GM12878 (cell line): ENCODE measurements at regions of chr16 and their contacts with region 1.

Region 1: DNA sequence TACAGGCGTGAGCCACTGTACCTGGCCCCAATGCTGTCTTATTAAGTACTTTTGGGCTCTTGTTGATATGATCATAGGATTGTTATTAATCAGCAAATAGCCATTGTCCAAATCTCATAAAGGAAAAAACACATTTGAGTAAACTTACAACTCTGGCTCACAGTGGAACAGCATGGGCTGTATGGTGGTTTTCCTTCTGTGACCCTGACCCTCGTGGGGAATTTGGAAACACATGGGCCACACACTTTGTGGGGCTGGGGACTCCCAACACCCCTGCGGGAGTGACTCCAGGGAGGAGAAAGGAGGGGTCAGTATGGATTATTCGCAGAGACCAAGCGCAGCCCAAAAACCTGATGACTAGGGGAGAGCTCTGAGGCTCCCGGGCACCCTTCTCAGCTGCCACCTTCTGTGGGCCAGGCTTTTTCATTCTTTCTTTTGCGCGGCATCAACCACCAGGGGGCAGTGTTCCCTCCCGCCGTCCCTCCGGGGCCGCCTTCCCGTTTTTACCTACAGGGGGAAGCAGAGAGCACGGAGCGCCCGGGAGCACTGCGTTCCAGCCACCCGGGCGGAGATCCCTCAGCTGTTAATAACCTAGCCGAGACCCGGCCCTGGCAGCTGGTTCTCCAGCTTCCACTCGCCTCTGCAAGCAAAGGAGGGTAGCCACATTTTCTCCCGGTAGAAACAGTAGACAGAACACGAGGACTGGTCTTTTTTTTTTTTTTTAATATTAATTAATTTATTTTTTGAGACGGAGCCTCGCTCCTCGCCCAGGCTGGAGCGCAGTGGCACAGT is 9.7 kb downstream of the TSNAXIP1 start:
- DNase-seq: no peak
- ATAC-seq: peak; percentile 98
- H3K4me3 ChIP-seq: no peak overlapping the region
- H3K27ac ChIP-seq: no peak overlapping the region
- H3K4me1 ChIP-seq: no peaks in the 10 kb centered on the region
- H3K27me3 ChIP-seq: no peaks in the 10 kb centered on the region
- CTCF ChIP-seq: peak; percentile 100; a peak in 5 of 6 replicates
- EP300 ChIP-seq: no peak
- POLR2A ChIP-seq: no peak
- RAD21 ChIP-seq: peak; percentile 85

Region 2: GRCh38 chr16:67713647-67714273 is 102.7 kb before region 1 on chr16:
- CTCF ChIA-PET with region 1: interaction called, 10 read pairs
- POLR2A ChIA-PET with region 1: interaction called, 4 read pairs
- RAD21 ChIA-PET with region 1: interaction called, 8 read pairs
- SMC1A ChIA-PET with region 1: interaction called, 4 read pairs
- in situ Hi-C with region 1: no loop called
- intact Hi-C with region 1: no loop called
- DNase-seq: no peak
- ATAC-seq: peak; percentile 68
- H3K4me3 ChIP-seq: no peak overlapping the region
- H3K27ac ChIP-seq: no peak overlapping the region
- H3K4me1 ChIP-seq: peaks cover 17% of the 10 kb centered on the region
- H3K27me3 ChIP-seq: no peaks in the 10 kb centered on the region
- CTCF ChIP-seq: no peak
- EP300 ChIP-seq: no peak
- POLR2A ChIP-seq: no peak
- RAD21 ChIP-seq: no peak

Region 3: GRCh38 chr16:67833418-67834241 is 17.2 kb after region 1 on chr16:
- CTCF ChIA-PET with region 1: interaction called, 31 read pairs
- POLR2A ChIA-PET with region 1: interaction called, 7 read pairs
- RAD21 ChIA-PET with region 1: interaction called, 7 read pairs
- SMC1A ChIA-PET with region 1: interaction called, 10 read pairs
- in situ Hi-C with region 1: no loop called
- intact Hi-C with region 1: no loop called
- DNase-seq: peak; percentile 83
- ATAC-seq: peak; percentile 100
- H3K4me3 ChIP-seq: peak overlapping the region; percentile 91
- H3K27ac ChIP-seq: peak overlapping the region; percentile 54
- H3K4me1 ChIP-seq: peaks cover 7% of the 10 kb centered on the region
- H3K27me3 ChIP-seq: no peaks in the 10 kb centered on the region
- CTCF ChIP-seq: no peak
- EP300 ChIP-seq: 0 out of 4 replicates have a peak, but pooled peaks of 1 of the 2 experiments have one; percentile 7
- POLR2A ChIP-seq: peak; percentile 97
- RAD21 ChIP-seq: no peak

Region 4: GRCh38 chr16:67928561-67929364 is 112.3 kb after region 1 on chr16:
- CTCF ChIA-PET with region 1: interaction called, 10 read pairs
- POLR2A ChIA-PET with region 1: interaction called, 4 read pairs
- RAD21 ChIA-PET with region 1: interaction called, 6 read pairs
- SMC1A ChIA-PET with region 1: interaction called, 5 read pairs
- in situ Hi-C with region 1: loop called (anchors 5 kb)
- intact Hi-C with region 1: loop called (anchors 1 kb)
- DNase-seq: no peak
- ATAC-seq: peak; percentile 94
- H3K4me3 ChIP-seq: no peak overlapping the region
- H3K27ac ChIP-seq: no peak overlapping the region
- H3K4me1 ChIP-seq: no peaks in the 10 kb centered on the region; the same call in 1 of the 2 replicates
- H3K27me3 ChIP-seq: no peaks in the 10 kb centered on the region
- CTCF ChIP-seq: peak; percentile 93 to 98 (median 96)
- EP300 ChIP-seq: no peak
- POLR2A ChIP-seq: peak; percentile 77
- RAD21 ChIP-seq: peak; percentile 88

Region 5: DNA sequence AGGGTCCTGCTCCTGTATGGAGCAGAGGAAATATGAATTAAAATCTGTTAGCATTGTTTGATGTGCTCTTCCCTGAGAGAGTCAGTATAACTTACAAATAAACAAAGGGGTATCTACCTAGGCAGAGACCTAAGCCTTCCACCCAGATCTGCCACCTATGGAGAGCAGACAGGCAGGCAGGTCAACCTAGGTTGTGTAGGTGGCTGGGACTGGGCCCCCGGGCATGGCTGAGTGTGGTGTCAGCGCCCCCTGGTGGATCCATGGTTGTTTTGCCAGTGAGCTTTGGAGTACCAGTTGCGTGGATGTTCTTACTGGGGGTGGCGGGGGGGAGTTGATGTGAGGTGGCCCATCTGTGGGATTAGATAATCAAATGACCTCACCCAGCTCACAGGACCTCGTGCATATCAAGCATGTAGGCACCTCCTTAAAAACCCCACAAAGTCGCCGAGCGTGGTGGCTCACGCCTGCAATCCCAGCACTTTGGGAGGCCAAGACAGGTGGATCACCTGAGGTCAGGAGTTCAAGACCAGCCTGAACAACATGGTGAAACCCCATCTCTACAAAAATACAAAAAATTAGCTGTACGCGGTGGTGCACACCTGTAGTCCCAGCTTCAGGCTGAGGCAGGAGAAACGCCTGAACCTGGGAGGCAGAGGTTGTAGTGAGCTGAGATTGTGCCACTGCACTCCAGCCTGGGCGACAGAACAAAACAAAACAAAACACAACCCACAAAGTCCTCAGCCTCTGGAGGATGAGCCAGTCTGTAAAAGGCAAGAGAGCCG is 224.3 kb after region 1 on chr16:
- CTCF ChIA-PET with region 1: interaction called, 27 read pairs
- POLR2A ChIA-PET with region 1: no interaction called
- RAD21 ChIA-PET with region 1: interaction called, 3 read pairs
- SMC1A ChIA-PET with region 1: interaction called, 12 read pairs
- in situ Hi-C with region 1: loop called (anchors 5 kb)
- intact Hi-C with region 1: loop called (anchors 1 kb)
- DNase-seq: peak; percentile 47
- ATAC-seq: peak; percentile 97
- H3K4me3 ChIP-seq: no peak overlapping the region
- H3K27ac ChIP-seq: peak overlapping the region; percentile 4; the same call in 1 of the 2 replicates
- H3K4me1 ChIP-seq: peaks cover 17% of the 10 kb centered on the region
- H3K27me3 ChIP-seq: no peaks in the 10 kb centered on the region
- CTCF ChIP-seq: peak; percentile 87 to 96 (median 93)
- EP300 ChIP-seq: no peak
- POLR2A ChIP-seq: no peak
- RAD21 ChIP-seq: peak; percentile 95